ENCODE measurements at regions of chr12 and their contacts with region 1.

Region 1: DNA sequence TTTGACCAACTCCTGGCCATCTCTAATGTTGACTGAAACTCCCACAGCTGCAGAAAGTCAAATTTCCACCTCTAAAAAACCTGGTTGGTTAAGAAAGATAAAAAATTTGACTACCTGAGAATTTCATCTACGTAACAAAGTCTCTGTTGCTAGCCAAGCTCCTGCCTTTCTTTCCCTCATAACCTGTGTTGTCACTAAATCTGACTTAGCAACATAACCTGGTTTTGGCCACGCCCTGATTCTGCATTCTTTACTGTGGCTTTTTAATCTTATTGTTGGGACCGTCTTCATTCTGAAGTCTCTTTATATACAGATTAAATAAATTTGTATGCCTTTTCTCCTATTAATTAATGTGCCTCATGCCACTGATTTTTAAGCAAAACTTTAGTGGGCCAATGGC is 16.1 kb upstream of the CD69 start:
- DNase-seq: no peak

Region 2: GRCh38 chr12:7832059-7832696 is 1944.6 kb before region 1 on chr12:
- intact Hi-C with region 1: loop called in 1 of 2 experiments (anchors 5 kb)
- DNase-seq: peak; percentile 11

Measured in posterior vena cava (tissue), 2 donors.